A549 (cell line): ENCODE measurements at regions of chr1 and their contacts with region 1.

Region 1: GRCh38 chr1:23559136-23559984 is at the start of gene ID3:
- DNase-seq: peak; percentile 54 to 95
- ATAC-seq: peak; percentile 24 to 47
- H3K4me3 ChIP-seq: peak within 1 kb of the TSS; percentile 92
- H3K27ac ChIP-seq: peak within 1 kb of the TSS; percentile 96 to 98
- H3K4me1 ChIP-seq: peaks cover 61% of the 10 kb centered on the region
- CTCF ChIP-seq: no peak
- EP300 ChIP-seq: no peak
- POLR2A ChIP-seq: peak; percentile 96
- RAD21 ChIP-seq: no peak; a peak in 2 of 5 replicates
- polyA plus RNA-seq, gene ID3: 171 and 193 TPM in 2 replicates

Region 2: GRCh38 chr1:23530747-23531561 is 28.4 kb before region 1 on chr1 and contains the start of gene E2F2:
- CTCF ChIA-PET with region 1: no interaction called
- POLR2A ChIA-PET with region 1: interaction called, 11 read pairs
- DNase-seq: peak; percentile 79 to 85
- ATAC-seq: peak; percentile 72 to 73
- H3K4me3 ChIP-seq: peak within 1 kb of the TSS; percentile 90
- H3K27ac ChIP-seq: peak within 1 kb of the TSS; percentile 76 to 94
- H3K4me1 ChIP-seq: peaks cover 53% of the 10 kb centered on the region
- CTCF ChIP-seq: no peak
- EP300 ChIP-seq: no peak
- POLR2A ChIP-seq: peak; percentile 29; the same call in 1 of the 2 replicates
- RAD21 ChIP-seq: no peak
- polyA plus RNA-seq, gene E2F2: 0.90 and 1.6 TPM in 2 replicates

Region 3: GRCh38 chr1:23577056-23578004 is 18.0 kb after region 1 on chr1:
- CTCF ChIA-PET with region 1: interaction called, 30 read pairs
- POLR2A ChIA-PET with region 1: interaction called, 168 read pairs
- DNase-seq: peak in 1 of 2 experiments; percentile 85
- ATAC-seq: peak; percentile 90 to 93
- H3K4me3 ChIP-seq: peak overlapping the region; percentile 16; the same call in 2 of the 3 replicates
- H3K27ac ChIP-seq: peak overlapping the region; percentile 96 to 100
- H3K4me1 ChIP-seq: peaks cover 67% of the 10 kb centered on the region
- CTCF ChIP-seq: no peak
- EP300 ChIP-seq: peak; percentile 69 to 82; a peak in 4 of 5 replicates
- POLR2A ChIP-seq: no peak
- RAD21 ChIP-seq: peak in 1 of 2 experiments; percentile 1; a peak in 2 of 5 replicates

Region 4: GRCh38 chr1:23591460-23592208 is 32.3 kb after region 1 on chr1:
- CTCF ChIA-PET with region 1: interaction called, 6 read pairs
- POLR2A ChIA-PET with region 1: interaction called, 53 read pairs
- DNase-seq: peak; percentile 42 to 86
- ATAC-seq: peak; percentile 78
- H3K4me3 ChIP-seq: no peak overlapping the region
- H3K27ac ChIP-seq: peak overlapping the region; percentile 96 to 100
- H3K4me1 ChIP-seq: peaks cover 96% of the 10 kb centered on the region
- CTCF ChIP-seq: no peak
- EP300 ChIP-seq: peak; percentile 83 to 85; a peak in 4 of 5 replicates
- POLR2A ChIP-seq: no peak
- RAD21 ChIP-seq: peak in 1 of 2 experiments; percentile 25; a peak in 2 of 5 replicates

Region 5: DNA sequence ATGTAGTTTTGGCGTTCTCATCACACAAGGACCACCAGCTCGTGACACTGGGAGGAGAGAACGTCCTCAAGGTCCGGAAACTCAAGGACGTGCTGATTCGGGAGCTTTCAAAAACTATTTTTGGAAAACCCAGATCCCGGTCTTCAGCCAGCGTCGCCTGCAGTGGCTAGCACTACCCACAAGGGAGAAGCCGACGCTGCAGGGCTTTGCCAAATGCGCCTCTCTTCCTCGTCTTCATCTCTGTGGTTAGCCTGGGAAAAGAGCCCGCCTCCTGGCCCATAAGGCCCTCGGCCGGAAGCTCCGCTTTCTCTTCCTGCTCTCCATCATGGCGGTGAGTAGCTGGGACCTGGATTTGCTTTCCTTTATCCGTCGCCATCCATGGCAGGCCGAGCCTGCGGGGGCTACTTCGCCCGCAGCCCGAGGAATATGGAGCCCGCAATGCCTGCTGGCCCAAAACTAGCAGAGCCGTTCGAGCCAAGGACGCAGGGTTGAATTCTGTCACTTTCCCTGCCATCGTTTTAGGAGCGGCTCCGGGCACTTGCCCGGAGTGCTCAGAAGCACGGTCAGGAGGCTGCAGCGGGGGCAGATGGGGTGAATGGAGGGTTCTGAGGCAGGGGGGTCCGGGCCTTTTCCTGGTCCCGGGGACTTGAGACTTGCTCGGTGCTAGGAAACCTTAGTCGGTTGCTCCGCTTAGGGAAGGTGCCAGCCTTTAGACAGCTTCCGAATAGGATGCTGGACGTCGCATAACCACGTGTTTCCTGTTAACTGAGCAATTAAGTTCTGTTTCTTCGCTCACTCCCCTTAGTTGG is 132.3 kb after region 1 on chr1 and contains the start of gene RPL11:
- CTCF ChIA-PET with region 1: no interaction called
- POLR2A ChIA-PET with region 1: interaction called, 13 read pairs
- DNase-seq: peak; percentile 83 to 95
- ATAC-seq: peak; percentile 99
- H3K4me3 ChIP-seq: peak within 1 kb of the TSS; percentile 97
- H3K27ac ChIP-seq: peak within 1 kb of the TSS; percentile 83 to 98
- H3K4me1 ChIP-seq: peaks cover 37% of the 10 kb centered on the region
- CTCF ChIP-seq: peak; percentile 38
- EP300 ChIP-seq: no peak
- POLR2A ChIP-seq: peak; percentile 76
- RAD21 ChIP-seq: 0 out of 5 replicates have a peak, but pooled peaks of 1 of the 2 experiments have one; percentile 26
- polyA plus RNA-seq, gene RPL11: 979 and 1,292 TPM in 2 replicates